Naive thymus-derived CD4-positive, alpha-beta T cell (primary cell): ENCODE measurements at regions of chr17 and their contacts with region 1.

Region 1: GRCh38 chr17:58352014-58352842 is at the start of gene SUPT4H1:
- DNase-seq: peak; percentile 83 to 93 (median 92)
- ATAC-seq: peak; percentile 98
- H3K4me3 ChIP-seq: peak within 1 kb of the TSS; percentile 95
- H3K4me3 Mint-ChIP-seq: peak within 1 kb of the TSS; percentile 97 to 100 (median 99)
- H3K27ac ChIP-seq: peak within 1 kb of the TSS; percentile 85
- H3K27ac Mint-ChIP-seq: peak within 1 kb of the TSS; percentile 93 to 99 (median 98)
- H3K4me1 ChIP-seq: peaks cover 16 to 31% of the 10 kb centered on the region in 2 donors
- H3K4me1 Mint-ChIP-seq: peaks cover 38 to 73% (median 66%) of the 10 kb centered on the region in 7 donors
- H3K27me3 ChIP-seq: no peaks in the 10 kb centered on the region
- H3K27me3 Mint-ChIP-seq: no peaks in the 10 kb centered on the region
- total RNA-seq, gene SUPT4H1: 36.0 to 75.6 (median 62.3) TPM

Region 2: GRCh38 chr17:58303971-58304725 is 48.1 kb before region 1 on chr17:
- CTCF ChIA-PET with region 1: interaction called, 4 read pairs
- POLR2A ChIA-PET with region 1: interaction called, 4 read pairs
- intact Hi-C with region 1: loop called in 1 of 2 experiments (anchors 1 kb)
- DNase-seq: peak in 8 of 9 donors; percentile 32 to 63 (median 53)
- ATAC-seq: peak; percentile 89
- H3K4me3 ChIP-seq: no peak overlapping the region
- H3K4me3 Mint-ChIP-seq: peak overlapping the region in 1 of 10 donors; percentile 38
- H3K27ac ChIP-seq: no peak overlapping the region
- H3K27ac Mint-ChIP-seq: peak overlapping the region in 1 of 9 donors; percentile 46
- H3K4me1 ChIP-seq: peaks cover 0 to 6% of the 10 kb centered on the region in 2 donors
- H3K4me1 Mint-ChIP-seq: peaks cover 0 to 7% (median 4%) of the 10 kb centered on the region in 7 donors
- H3K27me3 ChIP-seq: no peaks in the 10 kb centered on the region
- H3K27me3 Mint-ChIP-seq: peaks cover 0 to 5% (median 0%) of the 10 kb centered on the region in 5 donors

Region 3: GRCh38 chr17:58317421-58318064 is 34.7 kb before region 1 on chr17:
- CTCF ChIA-PET with region 1: interaction called, 257 read pairs
- POLR2A ChIA-PET with region 1: interaction called, 792 read pairs
- intact Hi-C with region 1: loop called in 1 of 2 experiments (anchors 2 kb)
- DNase-seq: peak; percentile 44 to 83 (median 77)
- ATAC-seq: peak; percentile 95
- H3K4me3 ChIP-seq: no peak overlapping the region
- H3K4me3 Mint-ChIP-seq: peak overlapping the region in 4 of 10 donors; percentile 4 to 58 (median 28)
- H3K27ac ChIP-seq: peak overlapping the region; percentile 47
- H3K27ac Mint-ChIP-seq: peak overlapping the region; percentile 58 to 94 (median 84)
- H3K4me1 ChIP-seq: peaks cover 11 to 12% of the 10 kb centered on the region in 2 donors
- H3K4me1 Mint-ChIP-seq: peaks cover 10 to 26% (median 13%) of the 10 kb centered on the region in 7 donors
- H3K27me3 ChIP-seq: no peaks in the 10 kb centered on the region
- H3K27me3 Mint-ChIP-seq: no peaks in the 10 kb centered on the region

Region 4: GRCh38 chr17:58323366-58324055 is 28.7 kb before region 1 on chr17:
- CTCF ChIA-PET with region 1: interaction called, 257 read pairs
- POLR2A ChIA-PET with region 1: interaction called, 792 read pairs
- intact Hi-C with region 1: loop called in 1 of 2 experiments (anchors 2 kb)
- DNase-seq: no peak
- ATAC-seq: no peak
- H3K4me3 ChIP-seq: no peak overlapping the region
- H3K4me3 Mint-ChIP-seq: peak overlapping the region in 1 of 10 donors; percentile 47
- H3K27ac ChIP-seq: no peak overlapping the region
- H3K27ac Mint-ChIP-seq: peak overlapping the region in 2 of 9 donors; percentile 55 to 65
- H3K4me1 ChIP-seq: peaks cover 0 to 13% of the 10 kb centered on the region in 2 donors
- H3K4me1 Mint-ChIP-seq: peaks cover 23 to 41% (median 37%) of the 10 kb centered on the region in 7 donors
- H3K27me3 ChIP-seq: no peaks in the 10 kb centered on the region
- H3K27me3 Mint-ChIP-seq: peaks cover 0 to 4% (median 0%) of the 10 kb centered on the region in 5 donors

Region 5: DNA sequence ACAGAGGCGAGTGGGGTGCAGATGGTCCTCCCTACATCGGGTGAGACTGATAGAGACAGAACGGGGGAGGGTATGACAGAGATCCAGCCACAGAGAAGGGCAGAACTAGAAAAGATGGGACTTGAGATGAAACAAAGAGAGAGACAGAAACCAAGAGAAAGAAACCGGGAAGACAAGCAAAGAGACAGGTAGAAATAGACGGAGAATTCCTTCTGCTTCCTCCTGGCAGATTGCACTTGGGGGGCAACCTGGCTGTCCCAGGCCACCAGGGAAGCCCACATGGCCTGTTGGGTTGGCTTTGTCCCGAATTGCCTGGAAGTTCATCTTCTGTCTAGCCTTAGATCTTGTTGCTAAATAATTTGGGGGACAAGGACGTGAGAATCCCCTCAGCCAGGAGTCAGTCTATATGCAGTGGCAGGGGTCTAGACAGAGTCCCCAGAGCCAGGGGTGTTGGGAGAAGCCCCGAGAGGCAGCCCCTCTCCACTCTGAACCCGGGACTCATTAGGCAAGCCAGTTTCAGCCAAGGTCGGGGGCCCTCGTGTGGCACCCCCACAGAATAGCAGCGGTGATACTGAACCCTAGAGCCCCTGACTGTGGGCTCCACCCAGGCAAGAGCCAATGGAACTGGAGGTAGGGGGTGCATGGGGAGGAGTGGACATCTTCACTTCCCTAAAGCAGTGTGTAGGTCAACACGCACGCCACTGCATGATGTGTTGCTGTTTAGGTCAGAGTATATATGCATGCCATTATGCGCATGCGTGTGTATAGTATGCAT is 23.0 kb before region 1 on chr17:
- CTCF ChIA-PET with region 1: interaction called, 257 read pairs
- POLR2A ChIA-PET with region 1: interaction called, 792 read pairs
- intact Hi-C with region 1: loop called (anchors 1 to 2 kb)
- DNase-seq: peak in 8 of 9 donors; percentile 52 to 83 (median 62)
- ATAC-seq: peak; percentile 62
- H3K4me3 ChIP-seq: peak overlapping the region; percentile 64
- H3K4me3 Mint-ChIP-seq: peak overlapping the region; percentile 86 to 100 (median 94)
- H3K27ac ChIP-seq: peak overlapping the region; percentile 98
- H3K27ac Mint-ChIP-seq: peak overlapping the region; percentile 91 to 98 (median 94)
- H3K4me1 ChIP-seq: peaks cover 4 to 18% of the 10 kb centered on the region in 2 donors
- H3K4me1 Mint-ChIP-seq: peaks cover 37 to 61% (median 50%) of the 10 kb centered on the region in 7 donors
- H3K27me3 ChIP-seq: no peaks in the 10 kb centered on the region
- H3K27me3 Mint-ChIP-seq: peaks cover 0 to 19% (median 0%) of the 10 kb centered on the region in 5 donors

Region 6: DNA sequence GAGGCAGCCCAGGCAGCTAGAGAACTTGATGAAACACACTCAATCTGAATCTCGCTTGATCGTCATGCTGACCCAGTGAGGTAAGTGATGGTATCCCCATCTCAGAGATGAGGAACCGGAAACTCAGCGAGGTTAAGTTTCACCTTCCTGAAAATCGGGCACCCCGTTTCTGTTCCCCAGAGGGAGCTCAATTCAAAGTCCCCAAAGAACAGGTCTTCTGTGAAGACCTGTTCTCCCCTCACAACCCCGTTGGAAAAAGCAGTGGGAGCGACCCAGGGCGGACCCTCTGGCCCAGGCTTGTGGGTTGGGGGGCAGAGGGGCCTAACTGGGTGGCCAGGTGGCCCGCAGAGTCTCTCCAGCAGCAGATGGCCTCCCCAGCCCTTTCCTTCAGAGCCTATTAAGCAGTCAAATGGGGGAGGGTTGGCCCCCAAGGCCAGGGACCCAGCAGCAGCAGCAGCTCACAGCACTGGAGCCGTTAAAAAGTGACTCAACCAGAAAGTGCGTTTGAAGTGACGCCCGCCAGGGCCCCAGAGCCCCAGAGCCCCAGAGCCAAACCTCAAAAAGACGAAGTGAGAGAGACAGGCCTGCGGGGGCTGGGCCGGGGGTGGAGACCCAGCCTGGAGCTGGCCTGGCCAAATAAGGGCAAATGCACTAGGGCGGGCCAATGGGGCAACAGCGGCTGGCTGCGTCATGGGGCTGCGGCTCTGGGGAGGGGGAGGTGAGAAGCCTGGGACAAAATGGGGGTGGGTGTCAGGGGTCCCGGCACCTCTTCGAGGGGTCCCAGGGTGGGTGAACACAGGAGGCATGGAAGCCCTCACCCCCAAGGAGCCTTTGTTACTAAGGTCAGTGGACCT is 14.4 kb before region 1 on chr17:
- CTCF ChIA-PET with region 1: interaction called, 10 read pairs
- POLR2A ChIA-PET with region 1: interaction called, 644 read pairs
- intact Hi-C with region 1: loop called (anchors 2 kb)
- DNase-seq: peak; percentile 73 to 93 (median 85)
- ATAC-seq: peak; percentile 88
- H3K4me3 ChIP-seq: peak overlapping the region; percentile 98
- H3K4me3 Mint-ChIP-seq: peak overlapping the region; percentile 86 to 100 (median 97)
- H3K27ac ChIP-seq: peak overlapping the region; percentile 98
- H3K27ac Mint-ChIP-seq: peak overlapping the region; percentile 89 to 100 (median 95)
- H3K4me1 ChIP-seq: peaks cover 59 to 77% of the 10 kb centered on the region in 2 donors
- H3K4me1 Mint-ChIP-seq: peaks cover 52 to 90% (median 65%) of the 10 kb centered on the region in 7 donors
- H3K27me3 ChIP-seq: no peaks in the 10 kb centered on the region
- H3K27me3 Mint-ChIP-seq: no peaks in the 10 kb centered on the region

Region 7: GRCh38 chr17:58377093-58377601 is 24.9 kb after region 1 on chr17:
- CTCF ChIA-PET with region 1: no interaction called
- POLR2A ChIA-PET with region 1: interaction called, 28 read pairs
- intact Hi-C with region 1: loop called in 1 of 2 experiments (anchors 2 kb)
- DNase-seq: no peak
- ATAC-seq: no peak
- H3K4me3 ChIP-seq: no peak overlapping the region
- H3K4me3 Mint-ChIP-seq: no peak overlapping the region
- H3K27ac ChIP-seq: no peak overlapping the region
- H3K27ac Mint-ChIP-seq: no peak overlapping the region
- H3K4me1 ChIP-seq: peaks cover 10 to 28% of the 10 kb centered on the region in 2 donors
- H3K4me1 Mint-ChIP-seq: peaks cover 27 to 50% (median 46%) of the 10 kb centered on the region in 7 donors
- H3K27me3 ChIP-seq: no peaks in the 10 kb centered on the region
- H3K27me3 Mint-ChIP-seq: no peaks in the 10 kb centered on the region